GM18951 (cell line): ENCODE measurements at regions of chrX and their contacts with region 1.

Region 1: GRCh38 chrX:68710870-68711576 is 63.6 kb downstream of the STARD8 start:
- POLR2A ChIP-seq: no peak

Region 2: GRCh38 chrX:68196939-68197791 is 513.9 kb before region 1 on chrX:
- in situ Hi-C with region 1: loop called (anchors 25 kb)
- POLR2A ChIP-seq: no peak

Region 3: GRCh38 chrX:68511255-68511654 is 199.8 kb before region 1 on chrX:
- in situ Hi-C with region 1: loop called (anchors 25 kb)
- POLR2A ChIP-seq: no peak